Naive thymus-derived CD4-positive, alpha-beta T cell (primary cell): ENCODE measurements at regions of chr18 and their contacts with region 1.

Region 1: DNA sequence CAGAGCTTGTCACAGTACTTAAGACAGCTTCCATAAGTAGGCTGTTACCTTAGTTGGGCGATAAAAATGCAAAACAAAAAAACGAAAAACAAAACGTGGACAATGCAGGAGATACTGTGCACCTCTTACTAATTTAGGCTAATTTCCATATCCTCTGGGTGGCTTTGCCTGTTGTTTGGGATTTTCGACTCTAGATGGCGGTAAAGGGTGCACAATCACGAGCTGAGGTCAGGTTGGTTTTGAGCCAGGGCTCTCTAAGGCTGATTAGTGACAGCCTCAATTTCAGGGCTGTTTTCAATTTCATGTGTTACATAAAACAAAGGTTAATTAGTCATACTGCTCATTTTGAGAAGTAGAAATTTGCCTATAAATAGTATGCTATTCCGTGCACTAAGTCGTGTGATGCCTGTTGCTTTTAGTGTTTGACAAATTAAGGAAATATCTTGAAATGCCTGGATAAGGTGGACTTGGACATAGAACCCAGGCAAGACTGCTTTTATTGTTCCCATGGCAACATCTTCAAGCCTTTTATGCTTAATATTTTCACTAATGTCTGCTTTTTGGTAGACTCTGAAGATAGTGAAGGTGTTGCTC is 493.1 kb downstream of the SOCS6 start:
- DNase-seq: peak; percentile 21 to 76 (median 72)
- ATAC-seq: peak; percentile 96
- H3K4me3 ChIP-seq: no peak overlapping the region
- H3K4me3 Mint-ChIP-seq: peak overlapping the region in 5 of 10 donors; percentile 2 to 60 (median 10)
- H3K27ac ChIP-seq: no peak overlapping the region
- H3K27ac Mint-ChIP-seq: peak overlapping the region in 3 of 9 donors; percentile 22 to 80 (median 77)
- H3K4me1 ChIP-seq: peaks cover 0 to 6% of the 10 kb centered on the region in 2 donors
- H3K4me1 Mint-ChIP-seq: peaks cover 0 to 24% (median 23%) of the 10 kb centered on the region in 7 donors
- H3K27me3 ChIP-seq: no peaks in the 10 kb centered on the region
- H3K27me3 Mint-ChIP-seq: no peaks in the 10 kb centered on the region

Region 2: GRCh38 chr18:70808481-70809056 is 26.6 kb after region 1 on chr18:
- CTCF ChIA-PET with region 1: no interaction called
- POLR2A ChIA-PET with region 1: no interaction called
- intact Hi-C with region 1: no loop called
- DNase-seq: no peak
- ATAC-seq: no peak
- H3K4me3 ChIP-seq: no peak overlapping the region
- H3K4me3 Mint-ChIP-seq: no peak overlapping the region
- H3K27ac ChIP-seq: no peak overlapping the region
- H3K27ac Mint-ChIP-seq: no peak overlapping the region
- H3K4me1 ChIP-seq: no peaks in the 10 kb centered on the region
- H3K4me1 Mint-ChIP-seq: no peaks in the 10 kb centered on the region
- H3K27me3 ChIP-seq: no peaks in the 10 kb centered on the region
- H3K27me3 Mint-ChIP-seq: no peaks in the 10 kb centered on the region

Region 3: DNA sequence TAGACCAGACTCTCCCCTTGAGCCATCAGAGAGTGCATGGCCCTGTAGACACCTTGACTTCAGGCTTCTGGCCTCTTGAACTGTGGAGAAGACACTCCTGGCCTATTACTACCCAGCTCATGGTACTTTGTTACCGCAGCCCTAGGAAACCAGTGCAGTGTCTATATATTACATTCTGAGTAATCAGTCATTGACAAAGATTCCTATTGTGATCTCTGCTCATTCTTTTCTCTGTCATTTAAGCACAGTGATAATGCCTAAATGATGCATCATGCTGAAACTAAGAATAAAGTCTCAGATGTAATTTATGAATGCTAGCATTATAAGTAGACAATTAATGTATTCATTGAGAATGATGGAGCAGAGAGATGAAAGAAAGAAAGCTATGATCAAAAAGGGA is 110.4 kb after region 1 on chr18:
- CTCF ChIA-PET with region 1: no interaction called
- POLR2A ChIA-PET with region 1: no interaction called
- intact Hi-C with region 1: loop called in 1 of 2 experiments (anchors 10 kb)
- DNase-seq: no peak
- ATAC-seq: no peak
- H3K4me3 ChIP-seq: no peak overlapping the region
- H3K4me3 Mint-ChIP-seq: no peak overlapping the region
- H3K27ac ChIP-seq: no peak overlapping the region
- H3K27ac Mint-ChIP-seq: no peak overlapping the region
- H3K4me1 ChIP-seq: no peaks in the 10 kb centered on the region
- H3K4me1 Mint-ChIP-seq: no peaks in the 10 kb centered on the region
- H3K27me3 ChIP-seq: no peaks in the 10 kb centered on the region
- H3K27me3 Mint-ChIP-seq: no peaks in the 10 kb centered on the region

Region 4: GRCh38 chr18:71784777-71785176 is 1002.8 kb after region 1 on chr18:
- CTCF ChIA-PET with region 1: no interaction called
- POLR2A ChIA-PET with region 1: no interaction called
- intact Hi-C with region 1: loop called in 1 of 2 experiments (anchors 2 kb)
- DNase-seq: peak in 3 of 9 donors; percentile 0 to 5 (median 0)
- ATAC-seq: no peak
- H3K4me3 ChIP-seq: no peak overlapping the region
- H3K4me3 Mint-ChIP-seq: no peak overlapping the region
- H3K27ac ChIP-seq: no peak overlapping the region
- H3K27ac Mint-ChIP-seq: no peak overlapping the region
- H3K4me1 ChIP-seq: no peaks in the 10 kb centered on the region
- H3K4me1 Mint-ChIP-seq: no peaks in the 10 kb centered on the region
- H3K27me3 ChIP-seq: no peaks in the 10 kb centered on the region
- H3K27me3 Mint-ChIP-seq: no peaks in the 10 kb centered on the region

Region 5: GRCh38 chr18:72544092-72544886 is 1762.3 kb after region 1 on chr18 and contains the start of gene CBLN2:
- CTCF ChIA-PET with region 1: no interaction called
- POLR2A ChIA-PET with region 1: no interaction called
- intact Hi-C with region 1: loop called in 1 of 2 experiments (anchors 5 kb)
- DNase-seq: peak in 1 of 9 donors; percentile 52
- ATAC-seq: no peak
- H3K4me3 ChIP-seq: no peak within 1 kb of the TSS
- H3K4me3 Mint-ChIP-seq: peak within 1 kb of the TSS in 8 of 10 donors; percentile 6 to 75 (median 42)
- H3K27ac ChIP-seq: no peak within 1 kb of the TSS
- H3K27ac Mint-ChIP-seq: peak within 1 kb of the TSS in 1 of 9 donors; percentile 5
- H3K4me1 ChIP-seq: no peaks in the 10 kb centered on the region
- H3K4me1 Mint-ChIP-seq: peaks cover 5 to 18% (median 12%) of the 10 kb centered on the region in 7 donors
- H3K27me3 ChIP-seq: no peaks in the 10 kb centered on the region
- H3K27me3 Mint-ChIP-seq: peaks cover 39 to 51% (median 44%) of the 10 kb centered on the region in 5 donors
- total RNA-seq, gene CBLN2: not detected

Region 6: DNA sequence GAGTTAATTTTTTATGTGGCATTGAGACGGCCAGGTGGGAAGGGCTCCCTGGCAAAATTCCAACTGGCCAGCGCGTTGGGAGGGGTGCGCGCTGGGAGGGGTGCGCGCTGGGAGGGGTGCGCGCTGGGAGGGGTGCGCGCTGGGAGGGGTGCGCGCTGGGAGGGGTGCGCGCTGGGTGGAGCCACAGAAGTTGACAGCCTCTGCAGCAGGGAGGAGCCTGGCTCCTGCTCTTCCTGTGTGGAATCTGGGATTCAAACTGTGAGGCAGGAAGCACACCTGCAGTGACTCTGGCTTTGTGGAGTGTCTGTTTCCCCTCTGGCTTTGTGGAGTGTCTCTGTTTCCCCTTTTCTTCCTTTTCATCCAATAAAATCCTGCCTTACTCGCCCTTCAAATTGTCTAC is 1910.1 kb after region 1 on chr18:
- CTCF ChIA-PET with region 1: no interaction called
- POLR2A ChIA-PET with region 1: no interaction called
- intact Hi-C with region 1: no loop called
- DNase-seq: no peak
- ATAC-seq: no peak
- H3K4me3 ChIP-seq: no peak overlapping the region
- H3K4me3 Mint-ChIP-seq: no peak overlapping the region
- H3K27ac ChIP-seq: no peak overlapping the region
- H3K27ac Mint-ChIP-seq: no peak overlapping the region
- H3K4me1 ChIP-seq: no peaks in the 10 kb centered on the region
- H3K4me1 Mint-ChIP-seq: no peaks in the 10 kb centered on the region
- H3K27me3 ChIP-seq: no peaks in the 10 kb centered on the region
- H3K27me3 Mint-ChIP-seq: peaks cover 0 to 8% (median 0%) of the 10 kb centered on the region in 5 donors